Activated CD8-positive, alpha-beta T cell treated with anti-CD3 and anti-CD28 coated beads for 36 hours (primary cell): ENCODE measurements at regions of chr13 and their contacts with region 1.

Region 1: GRCh38 chr13:48094781-48095502 is at the start of gene MED4:
- DNase-seq: peak; percentile 97
- ATAC-seq: peak; percentile 99
- H3K4me3 Mint-ChIP-seq: peak within 1 kb of the TSS; percentile 95
- H3K27ac Mint-ChIP-seq: peak within 1 kb of the TSS; percentile 92
- H3K4me1 Mint-ChIP-seq: peaks cover 36% of the 10 kb centered on the region
- H3K27me3 Mint-ChIP-seq: no peaks in the 10 kb centered on the region
- CTCF ChIP-seq: peak; percentile 98
- total RNA-seq, gene MED4: 53.6 to 57.2 TPM

Region 2: DNA sequence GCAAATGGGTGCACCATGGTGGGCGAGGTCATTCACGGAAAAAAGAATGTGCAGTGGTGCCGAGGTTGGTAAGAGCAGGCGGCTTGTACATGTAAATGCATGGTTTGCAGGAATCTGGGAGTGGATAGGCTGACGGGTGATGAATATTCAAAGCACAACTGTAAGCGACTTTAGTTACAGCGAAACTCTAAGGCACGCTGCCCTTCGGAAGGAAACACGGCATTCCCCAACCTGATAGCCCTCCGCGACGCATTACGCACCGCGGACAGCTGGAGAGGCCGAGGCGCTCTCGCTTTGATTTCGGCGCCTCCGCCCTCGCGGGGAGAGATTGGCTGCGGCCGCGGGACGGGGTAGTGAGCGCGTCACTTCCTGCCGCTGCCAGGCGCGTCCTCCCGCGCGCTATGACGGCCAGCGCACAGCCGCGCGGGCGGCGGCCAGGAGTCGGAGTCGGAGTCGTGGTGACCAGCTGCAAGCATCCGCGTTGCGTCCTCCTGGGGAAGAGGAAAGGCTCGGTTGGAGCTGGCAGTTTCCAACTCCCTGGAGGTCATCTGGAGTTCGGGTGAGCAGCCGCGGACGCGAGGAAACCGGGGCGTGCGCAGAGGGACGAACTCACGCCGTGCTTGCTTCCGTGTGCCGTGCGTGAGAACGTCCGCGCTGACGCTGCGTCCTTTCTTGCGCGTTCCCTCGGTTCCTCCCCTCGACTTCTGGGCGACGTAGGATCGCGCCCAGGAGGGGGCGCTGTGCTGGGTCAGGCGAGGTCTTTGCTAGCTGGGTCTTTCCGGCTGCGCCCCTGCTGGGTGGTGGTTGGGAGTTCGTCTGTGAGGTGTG is 57.4 kb before region 1 on chr13 and contains the start of gene NUDT15:
- CTCF ChIA-PET with region 1: interaction called, 28 read pairs
- POLR2A ChIA-PET with region 1: interaction called, 14 read pairs
- intact Hi-C with region 1: loop called (anchors 2 kb)
- DNase-seq: peak; percentile 97
- ATAC-seq: peak; percentile 89
- H3K4me3 Mint-ChIP-seq: peak within 1 kb of the TSS; percentile 90
- H3K27ac Mint-ChIP-seq: peak within 1 kb of the TSS; percentile 97
- H3K4me1 Mint-ChIP-seq: peaks cover 40% of the 10 kb centered on the region
- H3K27me3 Mint-ChIP-seq: no peaks in the 10 kb centered on the region
- CTCF ChIP-seq: peak; percentile 99
- total RNA-seq, gene NUDT15: 22.8 to 23.5 TPM

Region 3: GRCh38 chr13:48078251-48078656 is 16.7 kb before region 1 on chr13:
- CTCF ChIA-PET with region 1: interaction called, 21 read pairs
- POLR2A ChIA-PET with region 1: interaction called, 4 read pairs
- intact Hi-C with region 1: no loop called
- DNase-seq: peak; percentile 57
- ATAC-seq: peak; percentile 97
- H3K4me3 Mint-ChIP-seq: no peak overlapping the region
- H3K27ac Mint-ChIP-seq: peak overlapping the region; percentile 68
- H3K4me1 Mint-ChIP-seq: peaks cover 9% of the 10 kb centered on the region
- H3K27me3 Mint-ChIP-seq: no peaks in the 10 kb centered on the region
- CTCF ChIP-seq: peak; percentile 7